MCF 10A (cell line): ENCODE measurements at regions of chr1 and their contacts with region 1.

Region 1: DNA sequence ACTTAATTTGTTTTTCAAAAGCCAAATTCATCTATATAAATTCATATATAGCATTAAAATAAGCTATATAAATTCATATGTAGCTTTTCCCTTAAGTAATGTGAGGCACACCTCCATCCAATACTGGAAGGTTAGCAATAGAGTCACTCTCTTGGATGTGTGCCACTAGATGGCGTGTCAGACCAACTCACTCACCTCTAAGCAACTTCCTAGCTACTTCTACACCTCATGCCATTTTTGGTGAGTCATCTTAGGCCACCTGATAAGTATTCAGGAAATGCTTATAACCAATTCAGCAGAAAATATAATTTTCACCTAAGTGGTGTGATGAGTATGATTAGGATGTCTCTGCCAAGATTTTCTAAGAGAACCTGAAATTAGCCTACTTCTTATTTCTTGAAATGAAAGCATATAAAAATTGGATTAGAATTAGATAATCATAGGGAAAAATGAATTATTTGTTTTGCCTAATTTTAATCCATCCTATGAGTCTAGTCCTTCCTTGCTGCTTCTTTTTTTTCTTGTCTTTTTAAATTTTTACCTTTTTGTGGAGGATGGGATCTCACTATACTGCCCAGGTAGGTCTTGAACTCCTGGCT is 34.4 kb upstream of the TADA1 start:
- DNase-seq: peak; percentile 98
- H3K4me3 Mint-ChIP-seq: no peak overlapping the region
- H3K27ac Mint-ChIP-seq: no peak overlapping the region
- H3K4me1 Mint-ChIP-seq: no peaks in the 10 kb centered on the region
- H3K27me3 Mint-ChIP-seq: no peaks in the 10 kb centered on the region
- CTCF ChIP-seq: peak; percentile 91

Region 2: GRCh38 chr1:166297993-166298392 is 612.5 kb before region 1 on chr1:
- CTCF ChIA-PET with region 1: no interaction called
- POLR2A ChIA-PET with region 1: no interaction called
- intact Hi-C with region 1: no loop called
- DNase-seq: no peak
- H3K4me3 Mint-ChIP-seq: no peak overlapping the region
- H3K27ac Mint-ChIP-seq: no peak overlapping the region
- H3K4me1 Mint-ChIP-seq: no peaks in the 10 kb centered on the region
- H3K27me3 Mint-ChIP-seq: no peaks in the 10 kb centered on the region
- CTCF ChIP-seq: no peak

Region 3: DNA sequence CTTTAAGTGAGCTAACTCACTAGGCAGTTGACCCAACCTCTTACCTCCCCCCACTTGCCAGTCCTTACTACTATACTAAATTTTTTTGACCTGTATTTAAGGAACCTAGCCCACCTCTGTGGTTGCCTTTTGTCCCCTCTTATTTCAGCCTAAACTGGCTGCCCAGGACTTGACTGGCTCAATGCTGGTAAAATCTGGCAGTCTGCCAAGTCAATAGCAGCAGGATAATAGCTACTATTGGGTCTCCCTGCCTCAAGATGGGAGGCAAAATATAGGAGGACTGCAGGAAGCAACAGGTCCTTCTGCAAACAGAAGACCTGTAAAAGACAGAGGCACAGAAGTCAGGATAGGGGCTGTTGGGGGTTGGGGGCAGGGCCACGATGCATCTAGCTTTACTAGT is 215.4 kb before region 1 on chr1:
- CTCF ChIA-PET with region 1: no interaction called
- POLR2A ChIA-PET with region 1: no interaction called
- intact Hi-C with region 1: no loop called
- DNase-seq: peak; percentile 24
- H3K4me3 Mint-ChIP-seq: no peak overlapping the region
- H3K27ac Mint-ChIP-seq: no peak overlapping the region
- H3K4me1 Mint-ChIP-seq: peaks cover 17% of the 10 kb centered on the region
- H3K27me3 Mint-ChIP-seq: no peaks in the 10 kb centered on the region
- CTCF ChIP-seq: no peak

Region 4: DNA sequence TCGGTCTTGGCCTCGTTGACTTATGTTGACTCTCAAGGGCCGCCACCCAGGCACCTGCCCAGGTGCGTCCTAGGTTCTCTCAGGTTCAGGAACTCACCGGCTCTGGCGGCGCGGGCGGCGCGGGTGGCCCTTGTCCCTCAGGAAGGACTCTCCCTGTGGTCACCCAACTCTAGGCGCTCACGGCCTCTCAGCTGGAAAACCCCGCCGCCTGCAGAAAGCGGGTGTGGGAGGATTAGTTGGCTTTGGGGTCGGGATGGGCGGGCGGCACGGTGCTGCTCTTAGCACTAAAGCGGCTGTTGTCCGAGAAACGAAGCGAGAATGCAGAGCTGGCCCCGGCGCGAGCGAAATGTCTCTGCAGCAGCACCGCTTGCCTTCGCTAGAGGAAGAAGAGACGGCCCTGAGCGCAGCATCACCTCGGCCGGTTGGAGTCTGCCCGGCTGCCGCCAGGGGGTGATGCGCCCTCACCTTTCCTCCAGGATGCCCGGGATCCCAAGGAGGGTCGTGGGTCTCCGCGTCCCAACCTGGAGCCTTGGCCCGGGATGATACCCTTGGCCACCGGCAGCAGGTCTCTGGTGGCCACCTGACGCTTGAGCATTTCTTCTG is 26.4 kb before region 1 on chr1:
- CTCF ChIA-PET with region 1: interaction called, 24 read pairs
- POLR2A ChIA-PET with region 1: interaction called, 4 read pairs
- intact Hi-C with region 1: no loop called
- DNase-seq: no peak
- H3K4me3 Mint-ChIP-seq: no peak overlapping the region
- H3K27ac Mint-ChIP-seq: no peak overlapping the region
- H3K4me1 Mint-ChIP-seq: no peaks in the 10 kb centered on the region
- H3K27me3 Mint-ChIP-seq: no peaks in the 10 kb centered on the region
- CTCF ChIP-seq: peak; percentile 39

Region 5: DNA sequence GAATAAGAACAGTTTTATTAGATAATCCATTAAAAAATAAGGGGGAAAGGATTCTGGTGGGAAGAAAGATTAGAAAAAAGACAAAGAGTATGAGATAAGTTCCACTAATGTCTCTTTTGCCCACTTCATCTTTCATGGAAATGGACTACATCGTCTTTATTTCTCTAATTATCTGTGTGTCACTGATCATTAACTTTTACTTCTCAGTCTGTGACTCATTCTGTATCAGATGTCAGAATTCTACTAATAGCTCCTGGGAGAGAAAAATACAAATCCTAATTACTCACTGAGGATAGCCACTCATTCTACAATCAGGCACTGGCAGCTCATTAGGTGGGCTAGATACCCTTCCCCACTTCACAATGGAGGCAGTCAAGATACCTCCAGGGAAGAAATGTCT is 23.1 kb after region 1 on chr1:
- CTCF ChIA-PET with region 1: interaction called, 28 read pairs
- POLR2A ChIA-PET with region 1: no interaction called
- intact Hi-C with region 1: no loop called
- DNase-seq: no peak
- H3K4me3 Mint-ChIP-seq: no peak overlapping the region
- H3K27ac Mint-ChIP-seq: no peak overlapping the region
- H3K4me1 Mint-ChIP-seq: no peaks in the 10 kb centered on the region
- H3K27me3 Mint-ChIP-seq: peaks cover 66% of the 10 kb centered on the region
- CTCF ChIP-seq: no peak

Region 6: GRCh38 chr1:166975361-166976129 is 65.0 kb after region 1 on chr1 and contains the start of gene ILDR2:
- CTCF ChIA-PET with region 1: interaction called, 31 read pairs
- POLR2A ChIA-PET with region 1: interaction called, 4 read pairs
- intact Hi-C with region 1: no loop called
- DNase-seq: peak; percentile 26
- H3K4me3 Mint-ChIP-seq: peak within 1 kb of the TSS; percentile 68
- H3K27ac Mint-ChIP-seq: no peak within 1 kb of the TSS
- H3K4me1 Mint-ChIP-seq: peaks cover 25% of the 10 kb centered on the region
- H3K27me3 Mint-ChIP-seq: peaks cover 76% of the 10 kb centered on the region
- CTCF ChIP-seq: no peak
- total RNA-seq, gene ILDR2: 0.42 TPM in 2 replicates

Region 7: GRCh38 chr1:167121375-167122120 is 211.1 kb after region 1 on chr1:
- CTCF ChIA-PET with region 1: interaction called, 8 read pairs
- POLR2A ChIA-PET with region 1: no interaction called
- intact Hi-C with region 1: loop called (anchors 10 kb)
- DNase-seq: peak; percentile 37
- H3K4me3 Mint-ChIP-seq: peak overlapping the region; percentile 38
- H3K27ac Mint-ChIP-seq: peak overlapping the region; percentile 65
- H3K4me1 Mint-ChIP-seq: no peaks in the 10 kb centered on the region
- H3K27me3 Mint-ChIP-seq: peaks cover 10% of the 10 kb centered on the region
- CTCF ChIP-seq: no peak